ENCODE measurements at regions of chr4 and their contacts with region 1.

Region 1: GRCh38 chr4:108972613-108973283 is 209.9 kb upstream of the ETNPPL start:
- DNase-seq: peak; percentile 12
- H3K4me3 Mint-ChIP-seq: peak overlapping the region; percentile 30
- H3K27ac Mint-ChIP-seq: peak overlapping the region; percentile 91
- H3K4me1 Mint-ChIP-seq: peaks cover 35% of the 10 kb centered on the region
- H3K27me3 Mint-ChIP-seq: no peaks in the 10 kb centered on the region

Region 2: DNA sequence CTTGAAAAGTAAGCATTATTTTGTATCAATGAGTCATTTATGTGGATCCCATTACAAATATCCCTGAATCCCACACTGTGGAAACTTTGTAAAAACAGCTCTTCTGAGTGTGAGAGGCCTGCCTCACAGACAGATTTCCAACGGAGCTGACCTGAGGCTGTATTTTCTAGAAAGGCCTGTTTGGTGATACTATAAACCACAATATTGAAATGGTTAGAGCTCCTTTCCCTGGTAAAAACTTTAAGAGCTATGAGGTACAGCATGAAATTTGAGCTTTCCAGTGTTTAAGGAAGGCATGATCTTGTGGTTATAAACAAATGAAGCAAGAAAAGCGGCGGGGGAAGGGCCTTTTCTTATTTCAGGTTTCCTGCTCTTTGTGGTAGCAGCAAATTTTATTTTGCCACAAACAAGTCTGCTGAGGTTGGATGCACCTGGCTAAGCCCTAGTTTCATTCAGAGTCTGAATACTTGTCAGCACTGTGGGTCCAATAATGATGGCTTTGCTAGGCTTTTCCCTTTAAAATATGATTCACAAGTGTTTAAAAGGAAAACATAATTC is 123.1 kb before region 1 on chr4:
- intact Hi-C with region 1: loop called (anchors 5 kb)
- DNase-seq: no peak
- H3K4me3 Mint-ChIP-seq: no peak overlapping the region
- H3K27ac Mint-ChIP-seq: no peak overlapping the region
- H3K4me1 Mint-ChIP-seq: peaks cover 25% of the 10 kb centered on the region
- H3K27me3 Mint-ChIP-seq: no peaks in the 10 kb centered on the region